ENCODE measurements at regions of chr1 and their contacts with region 1.

Region 1: DNA sequence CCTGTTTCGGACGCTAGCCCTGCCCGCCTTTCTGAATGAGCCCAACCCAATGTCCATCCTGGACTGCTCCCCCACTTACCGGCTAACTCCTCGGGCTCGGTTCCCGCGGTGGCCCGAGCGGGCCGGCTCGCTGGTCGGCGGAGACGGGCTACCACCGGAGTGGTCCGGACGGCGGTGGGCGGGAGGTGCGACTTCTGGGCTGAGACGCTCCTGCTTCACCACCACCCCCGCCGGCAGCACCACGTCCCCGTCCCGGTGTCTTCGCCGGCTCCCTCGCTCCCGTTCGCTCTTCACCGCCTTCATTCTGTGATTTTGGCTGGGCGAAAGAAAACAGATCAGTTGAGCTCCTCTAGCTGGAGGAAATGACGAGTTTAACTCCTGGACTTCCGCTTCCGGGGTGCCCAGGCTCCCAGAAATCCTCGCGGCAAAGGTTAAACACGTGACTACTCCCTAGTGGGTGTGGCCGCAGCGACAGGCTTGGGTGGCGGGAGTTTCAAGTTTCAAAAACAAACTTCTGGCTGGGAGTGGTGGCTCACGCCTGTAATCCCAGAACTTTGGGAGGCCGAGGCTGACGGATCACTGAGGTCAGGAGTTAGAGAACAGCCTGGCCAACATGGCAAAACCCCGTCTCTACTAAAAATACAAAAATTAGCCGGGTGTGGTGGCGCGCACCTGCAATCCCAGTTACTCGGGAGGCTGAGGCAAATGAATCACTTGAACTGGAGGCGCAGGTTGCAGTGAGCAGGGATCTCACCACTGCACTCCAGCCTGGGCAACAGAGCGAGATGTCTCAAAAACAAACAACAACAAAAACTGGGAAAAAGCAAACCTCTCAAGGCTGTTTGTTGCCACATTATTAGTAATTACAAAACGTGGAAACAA is at the start of gene SNIP1:
- DNase-seq: peak; percentile 91 to 99 (median 98)
- H3K4me3 ChIP-seq: peak within 1 kb of the TSS; percentile 70 to 100 (median 96)
- H3K27ac ChIP-seq: peak within 1 kb of the TSS in 52 of 59 donors; percentile 1 to 91 (median 76)
- H3K27me3 ChIP-seq: no peaks in the 10 kb centered on the region
- CTCF ChIP-seq: peak in 27 of 56 donors; percentile 14 to 57 (median 35)
- total RNA-seq, gene SNIP1: 8.4 to 24.4 (median 16.7) TPM

Region 2: DNA sequence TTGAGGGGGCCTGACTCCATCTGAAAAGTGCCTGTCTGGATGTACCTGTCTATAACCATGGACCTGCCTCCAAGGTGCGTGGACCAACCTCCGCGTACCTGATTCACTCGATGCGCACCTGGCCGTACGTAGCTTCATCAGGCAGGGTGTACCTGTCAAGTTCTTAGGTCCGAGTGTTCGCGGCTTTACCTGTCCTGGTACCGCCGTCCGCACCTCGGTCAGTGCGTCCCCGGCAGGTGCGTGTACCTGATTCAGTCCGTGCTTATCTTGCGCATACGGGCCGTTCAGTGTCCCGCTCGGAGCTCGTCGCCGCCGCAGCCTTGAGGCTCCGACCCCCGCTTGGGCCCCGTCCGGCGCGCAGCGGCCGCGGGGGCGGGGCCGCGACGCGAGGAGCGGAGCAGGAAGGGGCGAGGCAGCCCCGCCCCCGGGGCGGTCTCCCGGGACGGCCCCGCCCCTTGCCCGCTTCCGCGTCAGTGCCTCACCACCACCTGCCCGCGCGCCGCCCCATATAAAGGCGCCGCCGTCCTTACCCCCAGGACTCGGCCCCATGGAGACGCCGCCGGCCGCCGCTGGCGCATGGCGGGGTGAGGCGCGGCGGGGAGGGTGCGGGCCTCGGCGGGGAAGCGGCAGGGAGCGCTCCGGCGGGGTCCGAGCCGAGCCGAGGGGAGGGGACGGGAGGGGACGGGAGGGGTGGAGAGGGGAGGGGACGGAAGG is 80.0 kb before region 1 on chr1 and contains the start of gene ZC3H12A:
- intact Hi-C with region 1: loop called in 1 of 2 experiments (anchors 10 kb)
- DNase-seq: peak; percentile 76 to 90 (median 81)
- H3K4me3 ChIP-seq: peak within 1 kb of the TSS; percentile 54 to 90 (median 78)
- H3K27ac ChIP-seq: peak within 1 kb of the TSS in 53 of 59 donors; percentile 7 to 89 (median 72)
- H3K27me3 ChIP-seq: no peaks in the 10 kb centered on the region
- CTCF ChIP-seq: peak in 4 of 56 donors; percentile 10 to 33 (median 18)
- total RNA-seq, gene ZC3H12A: 0.46 to 7.2 (median 1.7) TPM

Region 3: GRCh38 chr1:37595440-37596319 is 41.5 kb after region 1 on chr1 and contains the start of gene GNL2:
- intact Hi-C with region 1: loop called (anchors 1 to 5 kb)
- DNase-seq: peak; percentile 93 to 98 (median 96)
- H3K4me3 ChIP-seq: peak within 1 kb of the TSS; percentile 63 to 99 (median 91)
- H3K27ac ChIP-seq: peak within 1 kb of the TSS in 51 of 59 donors; percentile 11 to 89 (median 57)
- H3K27me3 ChIP-seq: no peaks in the 10 kb centered on the region
- CTCF ChIP-seq: peak in 42 of 56 donors; percentile 9 to 61 (median 32)
- total RNA-seq, gene GNL2: 13.0 to 31.1 (median 20.2) TPM

Region 4: DNA sequence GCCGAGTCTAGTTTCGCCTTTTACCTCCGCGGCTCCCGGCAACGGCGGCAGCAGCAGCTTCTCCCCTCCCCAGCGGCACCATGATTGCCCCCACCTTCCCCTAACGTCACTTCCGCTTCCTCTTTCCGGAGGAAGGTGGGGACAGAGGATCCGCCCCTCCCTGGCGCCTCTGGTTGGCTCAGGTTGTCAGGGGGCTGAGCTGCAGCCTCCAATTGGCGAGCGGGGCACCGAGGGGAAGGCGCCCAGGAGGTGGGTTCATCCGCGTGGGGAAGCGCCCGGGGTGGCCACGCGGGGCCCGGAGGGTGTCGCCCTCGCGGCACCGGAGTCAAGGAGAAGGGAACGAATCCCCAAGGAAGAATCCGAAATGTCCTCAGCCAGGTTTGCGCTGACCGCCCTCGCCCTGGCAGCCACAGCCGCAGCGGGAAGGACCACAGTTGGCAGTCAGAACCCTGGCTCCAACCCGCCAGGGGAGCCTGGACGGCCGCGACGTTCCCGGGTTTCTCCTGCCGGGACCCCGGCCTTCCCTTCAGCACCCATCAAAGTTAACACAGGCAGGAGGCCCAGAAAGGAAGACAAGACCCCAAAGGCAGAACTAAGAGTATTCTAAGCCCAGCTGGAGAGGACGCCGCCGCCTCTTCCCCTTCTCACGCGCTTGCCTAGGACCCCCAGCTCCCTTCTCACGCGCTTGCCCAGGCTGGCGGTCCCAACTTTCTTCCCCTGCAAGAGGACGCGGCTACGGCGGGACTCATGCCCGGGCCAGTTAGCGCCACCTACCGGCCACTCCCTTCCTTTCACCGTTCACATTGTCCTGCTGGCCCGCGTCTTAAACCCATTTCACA is 305.6 kb after region 1 on chr1 and contains the start of gene MTF1:
- intact Hi-C with region 1: loop called in 1 of 2 experiments (anchors 10 kb)
- DNase-seq: peak; percentile 89 to 98 (median 97)
- H3K4me3 ChIP-seq: peak within 1 kb of the TSS; percentile 76 to 100 (median 93)
- H3K27ac ChIP-seq: peak within 1 kb of the TSS; percentile 60 to 95 (median 88)
- H3K27me3 ChIP-seq: no peaks in the 10 kb centered on the region
- CTCF ChIP-seq: peak; percentile 68 to 98 (median 89)
- total RNA-seq, gene MTF1: 12.4 to 40.5 (median 22.6) TPM